ENCODE measurements at regions of chr22 and their contacts with region 1.

Region 1: DNA sequence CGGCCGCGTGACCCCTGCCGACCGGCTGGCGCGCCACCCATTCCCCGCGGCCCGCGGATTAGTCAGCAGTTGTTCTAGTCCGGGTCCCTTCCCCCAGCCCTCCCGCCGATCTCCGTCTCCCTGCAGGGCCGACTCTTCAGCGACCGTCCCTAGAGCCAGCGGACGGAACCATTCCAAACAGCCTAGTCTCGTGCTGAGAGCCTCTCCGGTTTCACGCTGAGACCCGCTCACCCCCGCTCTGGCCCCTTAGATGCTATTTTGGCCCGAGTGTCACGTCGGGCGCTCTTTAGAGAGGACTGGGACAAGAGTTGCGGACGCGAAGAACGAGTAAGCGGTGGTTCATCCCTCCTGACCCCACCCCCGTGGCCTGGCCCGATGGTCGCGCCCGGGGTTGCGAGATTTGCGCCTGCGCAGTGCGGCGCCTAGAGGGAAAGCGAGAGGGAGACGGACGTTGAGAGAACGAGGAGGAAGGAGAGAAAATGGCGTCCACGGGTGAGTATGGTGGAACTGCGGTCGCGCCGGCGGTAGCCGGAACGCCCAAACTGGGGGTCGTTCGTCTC is at the starts of genes EWSR1 and RHBDD3:
- DNase-seq: peak; percentile 95
- H3K4me3 ChIP-seq: peak within 1 kb of the TSS; percentile 66 to 91 (median 75)
- H3K27ac ChIP-seq: peak within 1 kb of the TSS; percentile 98
- H3K4me1 ChIP-seq: peaks cover 35% of the 10 kb centered on the region
- H3K27me3 ChIP-seq: no peaks in the 10 kb centered on the region
- CTCF ChIP-seq: no peak
- total RNA-seq, gene EWSR1: 164 to 307 TPM
- total RNA-seq, gene RHBDD3: 18.0 to 25.7 TPM

Region 2: GRCh38 chr22:28800308-28801077 is 467.4 kb before region 1 on chr22 and contains the start of gene XBP1:
- CTCF ChIA-PET with region 1: no interaction called
- dilution Hi-C with region 1: no loop called
- in situ Hi-C with region 1: no loop called
- intact Hi-C with region 1: loop called (anchors 5 kb)
- DNase-seq: peak; percentile 95
- H3K4me3 ChIP-seq: peak within 1 kb of the TSS; percentile 67 to 86 (median 72)
- H3K27ac ChIP-seq: peak within 1 kb of the TSS; percentile 98
- H3K4me1 ChIP-seq: peaks cover 10% of the 10 kb centered on the region
- H3K27me3 ChIP-seq: no peaks in the 10 kb centered on the region
- CTCF ChIP-seq: no peak
- total RNA-seq, gene XBP1: 166 to 224 TPM

Region 3: GRCh38 chr22:29205594-29206371 is 62.2 kb before region 1 on chr22 and contains the start of gene EMID1:
- CTCF ChIA-PET with region 1: no interaction called
- dilution Hi-C with region 1: no loop called
- in situ Hi-C with region 1: no loop called
- intact Hi-C with region 1: no loop called
- DNase-seq: no peak
- H3K4me3 ChIP-seq: peak within 1 kb of the TSS in 2 of 3 experiments; percentile 38 to 40
- H3K27ac ChIP-seq: no peak within 1 kb of the TSS
- H3K4me1 ChIP-seq: peaks cover 3% of the 10 kb centered on the region
- H3K27me3 ChIP-seq: peaks cover 12% of the 10 kb centered on the region
- CTCF ChIP-seq: peak in 1 of 2 donors; percentile 15
- total RNA-seq, gene EMID1: 0.67 TPM in 1 of 2 donors, not detected in the other

Measured in mammary epithelial cell (primary cell).